ENCODE measurements at regions of chr12 and their contacts with region 1.

Region 1: GRCh38 chr12:92987362-92987761 is 58.3 kb upstream of the EEA1 start:
- DNase-seq: peak; percentile 27
- ATAC-seq: peak; percentile 89
- H3K4me3 ChIP-seq: no peak overlapping the region
- H3K27ac ChIP-seq: peak overlapping the region; percentile 20; the same call in 1 of the 2 replicates
- H3K4me1 ChIP-seq: 0 out of 2 replicates have a peak, but pooled peaks cover 5% of the 10 kb centered on the region
- H3K27me3 ChIP-seq: no peaks in the 10 kb centered on the region
- CTCF ChIP-seq: peak; percentile 62; the same call in 1 of the 2 replicates

Region 2: DNA sequence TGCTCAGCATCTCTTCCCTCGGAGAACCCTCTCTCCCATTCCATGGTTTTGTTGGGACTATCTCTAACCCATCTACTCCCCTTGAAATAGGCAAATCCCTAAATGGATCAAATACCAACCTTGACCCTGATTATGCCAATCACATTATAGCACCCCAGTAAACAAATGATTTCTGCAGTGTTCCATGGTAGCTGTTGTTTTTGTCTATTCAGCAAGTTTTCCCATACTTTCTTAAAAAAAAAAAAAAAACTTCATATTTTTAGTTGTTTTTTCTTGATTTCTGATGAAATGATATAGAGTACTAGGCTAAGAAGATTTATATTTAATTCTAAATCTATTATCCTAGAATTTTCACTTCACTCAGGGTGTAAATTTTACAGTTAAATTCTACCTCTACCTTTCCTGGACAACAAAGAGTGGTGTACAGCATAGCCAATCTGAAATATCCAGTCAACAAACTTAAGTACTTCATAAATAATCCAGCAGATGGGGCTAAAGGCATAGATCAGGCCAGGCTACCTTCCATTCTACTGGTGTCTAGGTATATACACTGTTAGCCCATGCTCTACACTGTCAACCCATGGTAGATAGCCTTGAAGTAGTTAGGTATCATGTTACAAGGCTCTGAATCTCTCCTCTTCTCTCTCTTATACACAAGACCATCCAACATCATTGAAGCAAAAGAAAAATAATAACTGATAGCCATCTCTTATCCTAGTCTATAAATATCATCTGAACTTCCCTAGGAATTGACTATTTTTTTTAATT is 202.4 kb before region 1 on chr12:
- CTCF ChIA-PET with region 1: interaction called, 5 read pairs
- POLR2A ChIA-PET with region 1: no interaction called
- in situ Hi-C with region 1: no loop called
- intact Hi-C with region 1: loop called (anchors 10 kb)
- DNase-seq: peak; percentile 53
- ATAC-seq: peak; percentile 99
- H3K4me3 ChIP-seq: no peak overlapping the region
- H3K27ac ChIP-seq: no peak overlapping the region
- H3K4me1 ChIP-seq: no peaks in the 10 kb centered on the region
- H3K27me3 ChIP-seq: no peaks in the 10 kb centered on the region
- CTCF ChIP-seq: peak; percentile 65; the same call in 1 of the 2 replicates

Region 3: DNA sequence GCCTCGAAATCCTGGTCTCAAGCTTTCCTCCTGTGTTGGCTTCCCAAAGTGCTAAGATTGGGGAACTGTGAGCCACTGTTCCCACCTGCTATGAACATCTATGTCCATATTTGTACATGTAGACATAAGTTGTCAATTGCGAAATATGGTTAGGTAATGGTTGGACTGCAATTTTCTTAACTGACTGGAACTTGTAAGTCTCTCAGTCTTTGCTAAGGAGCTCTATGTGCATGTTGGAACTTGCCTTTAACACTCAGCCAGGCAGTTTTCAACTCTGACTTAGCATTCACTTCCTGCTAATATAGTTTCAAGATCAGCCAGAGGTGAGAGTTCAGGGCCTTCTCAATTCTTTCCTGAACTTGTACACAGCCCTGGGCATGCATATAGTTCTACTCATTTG is 13.8 kb before region 1 on chr12:
- CTCF ChIA-PET with region 1: interaction called, 10 read pairs
- POLR2A ChIA-PET with region 1: no interaction called
- in situ Hi-C with region 1: no loop called
- intact Hi-C with region 1: no loop called
- DNase-seq: no peak
- ATAC-seq: no peak
- H3K4me3 ChIP-seq: no peak overlapping the region
- H3K27ac ChIP-seq: no peak overlapping the region
- H3K4me1 ChIP-seq: no peaks in the 10 kb centered on the region; the same call in 1 of the 2 replicates
- H3K27me3 ChIP-seq: no peaks in the 10 kb centered on the region
- CTCF ChIP-seq: no peak

Region 4: DNA sequence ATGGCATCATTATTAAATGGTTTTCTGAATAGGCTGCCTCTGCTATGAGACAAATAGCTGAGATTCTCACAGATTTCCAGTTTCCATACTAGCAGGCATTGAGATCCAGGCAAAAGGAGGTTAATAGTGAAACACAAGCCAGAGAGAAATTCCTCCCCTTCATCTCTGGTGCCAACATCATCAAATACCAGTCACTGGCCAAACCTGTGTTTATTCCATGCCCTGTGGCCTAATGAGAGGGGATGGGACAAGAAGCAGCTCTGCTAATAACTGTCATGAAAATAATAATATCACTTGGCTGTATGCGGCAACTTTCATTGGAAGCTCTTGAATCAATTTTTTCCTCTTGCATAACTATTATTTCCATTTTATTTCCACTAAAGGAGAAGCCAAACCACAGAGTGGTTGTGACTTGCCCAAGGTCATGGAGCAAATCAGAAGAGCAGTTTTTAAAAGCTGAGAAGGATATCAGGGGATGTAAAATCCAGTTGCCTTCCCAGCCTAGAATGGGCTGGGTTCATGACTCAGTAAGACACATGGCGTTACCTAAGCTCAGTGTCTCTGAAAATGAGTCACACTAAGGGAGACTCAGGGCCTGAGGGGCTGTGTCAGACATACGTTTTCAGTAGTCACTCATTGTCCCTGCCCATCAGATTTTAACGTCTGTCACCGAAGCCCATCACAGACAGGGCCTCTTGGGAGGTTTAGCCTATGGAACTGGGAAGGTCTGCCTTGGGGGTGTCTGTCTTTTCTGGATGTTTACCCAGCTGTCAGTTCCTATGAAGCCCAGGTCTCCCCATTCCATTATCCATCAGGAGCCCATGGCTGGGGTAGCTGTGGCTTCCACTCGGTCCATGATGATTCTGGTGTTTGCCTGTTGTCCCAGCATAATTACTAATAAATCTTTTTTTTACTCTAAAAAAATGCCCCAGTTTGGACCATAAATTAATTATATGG is 150.6 kb after region 1 on chr12:
- CTCF ChIA-PET with region 1: no interaction called
- POLR2A ChIA-PET with region 1: no interaction called
- in situ Hi-C with region 1: no loop called
- intact Hi-C with region 1: no loop called
- DNase-seq: no peak
- ATAC-seq: no peak
- H3K4me3 ChIP-seq: no peak overlapping the region
- H3K27ac ChIP-seq: no peak overlapping the region
- H3K4me1 ChIP-seq: no peaks in the 10 kb centered on the region
- H3K27me3 ChIP-seq: no peaks in the 10 kb centered on the region
- CTCF ChIP-seq: no peak

Region 5: DNA sequence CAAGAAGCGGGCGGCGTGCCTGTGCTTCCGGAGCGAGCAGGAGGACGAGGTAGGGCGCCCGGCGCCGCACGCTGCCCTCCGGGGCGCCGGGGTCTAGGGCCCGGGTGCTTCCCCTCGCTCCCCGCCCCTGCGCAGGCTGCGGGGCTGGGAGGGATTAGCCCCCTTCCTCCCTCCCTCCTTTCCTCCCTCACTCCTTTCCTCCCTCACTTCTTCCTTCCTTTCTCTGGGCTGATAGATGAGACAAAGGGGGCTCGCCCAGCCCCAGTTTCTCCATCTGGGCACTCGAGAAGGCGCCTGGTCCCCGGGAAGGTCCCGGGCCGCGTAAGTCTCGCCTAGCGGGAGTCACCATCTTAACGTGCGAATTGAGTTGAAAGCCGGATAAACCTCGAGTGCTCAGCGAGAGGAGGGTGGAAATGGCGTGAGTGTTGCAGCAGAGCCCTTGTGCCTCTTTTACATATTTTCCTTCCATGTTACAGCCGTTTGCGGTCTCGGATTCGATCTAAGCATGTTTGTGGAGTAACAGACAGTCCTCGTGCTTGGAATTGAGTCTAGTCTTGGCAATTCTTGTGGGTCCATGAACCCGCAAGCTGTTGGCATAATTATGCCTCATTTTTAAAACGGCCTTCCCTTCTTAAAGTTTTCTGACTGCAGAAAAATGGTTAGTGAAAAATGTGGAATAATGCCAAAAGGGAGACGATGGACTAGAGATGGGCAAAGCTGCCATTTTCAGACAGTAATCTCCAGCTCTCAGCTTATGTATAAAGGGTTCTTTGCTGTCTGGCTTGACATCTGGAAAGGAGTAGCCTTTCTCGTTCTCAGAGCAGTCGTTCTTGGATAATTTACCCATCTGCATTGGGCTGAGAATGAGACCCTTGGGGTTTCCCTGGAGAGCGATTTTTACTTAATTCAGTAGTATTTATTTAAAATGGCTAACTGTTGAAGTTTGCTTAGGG is 391.3 kb after region 1 on chr12:
- CTCF ChIA-PET with region 1: interaction called, 4 read pairs
- POLR2A ChIA-PET with region 1: no interaction called
- in situ Hi-C with region 1: no loop called
- intact Hi-C with region 1: loop called (anchors 5 kb)
- DNase-seq: no peak
- ATAC-seq: peak; percentile 14
- H3K4me3 ChIP-seq: peak overlapping the region; percentile 93 to 100
- H3K27ac ChIP-seq: peak overlapping the region; percentile 92
- H3K4me1 ChIP-seq: peaks cover 27% of the 10 kb centered on the region
- H3K27me3 ChIP-seq: no peaks in the 10 kb centered on the region
- CTCF ChIP-seq: no peak

Region 6: GRCh38 chr12:93397412-93397811 is 410.1 kb after region 1 on chr12:
- CTCF ChIA-PET with region 1: interaction called, 3 read pairs
- POLR2A ChIA-PET with region 1: no interaction called
- in situ Hi-C with region 1: no loop called
- intact Hi-C with region 1: loop called (anchors 2 kb)
- DNase-seq: no peak
- ATAC-seq: no peak
- H3K4me3 ChIP-seq: no peak overlapping the region
- H3K27ac ChIP-seq: no peak overlapping the region
- H3K4me1 ChIP-seq: no peaks in the 10 kb centered on the region
- H3K27me3 ChIP-seq: no peaks in the 10 kb centered on the region
- CTCF ChIP-seq: no peak

Measured in Panc1 (cell line).